Mammary epithelial cell (primary cell): ENCODE measurements at regions of chr6 and their contacts with region 1.

Region 1: DNA sequence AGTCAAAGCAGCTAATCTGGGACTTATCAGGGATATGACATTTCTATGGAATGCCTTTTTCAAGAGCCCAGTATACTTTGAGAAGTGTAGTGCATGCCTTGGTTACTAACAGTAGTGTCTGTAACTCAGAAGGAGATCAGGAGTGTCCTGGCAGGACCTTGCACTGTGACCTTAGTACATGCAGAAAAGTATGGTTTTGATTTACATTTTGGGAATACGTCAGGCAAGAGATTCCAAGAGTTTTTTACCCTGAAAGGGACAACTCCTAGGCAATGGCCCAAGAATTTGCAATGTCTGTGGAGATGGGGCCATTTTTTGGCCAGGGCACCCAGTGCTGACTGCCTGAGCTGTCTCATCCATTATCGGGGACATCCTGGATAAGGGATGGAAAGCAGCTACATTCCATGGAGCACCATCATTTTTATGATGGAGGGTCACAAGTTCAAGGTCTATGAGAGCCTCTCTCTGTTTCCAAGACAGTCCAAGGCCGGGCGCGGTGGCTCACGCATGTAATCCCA is 80.2 kb downstream of the FAM50B start:
- DNase-seq: no peak
- H3K4me3 ChIP-seq: no peak overlapping the region
- H3K27ac ChIP-seq: no peak overlapping the region
- H3K4me1 ChIP-seq: no peaks in the 10 kb centered on the region
- H3K27me3 ChIP-seq: no peaks in the 10 kb centered on the region
- CTCF ChIP-seq: no peak

Region 2: GRCh38 chr6:3687847-3688246 is 241.5 kb before region 1 on chr6:
- CTCF ChIA-PET with region 1: interaction called, 47 read pairs
- dilution Hi-C with region 1: no loop called
- in situ Hi-C with region 1: no loop called
- intact Hi-C with region 1: no loop called
- DNase-seq: no peak
- H3K4me3 ChIP-seq: no peak overlapping the region
- H3K27ac ChIP-seq: no peak overlapping the region
- H3K4me1 ChIP-seq: no peaks in the 10 kb centered on the region
- H3K27me3 ChIP-seq: no peaks in the 10 kb centered on the region
- CTCF ChIP-seq: no peak

Region 3: GRCh38 chr6:3825851-3826581 is 103.3 kb before region 1 on chr6:
- CTCF ChIA-PET with region 1: no interaction called
- dilution Hi-C with region 1: no loop called
- in situ Hi-C with region 1: no loop called
- intact Hi-C with region 1: loop called (anchors 1 kb)
- DNase-seq: peak; percentile 95
- H3K4me3 ChIP-seq: peak overlapping the region in 1 of 3 experiments; percentile 11
- H3K27ac ChIP-seq: peak overlapping the region; percentile 91
- H3K4me1 ChIP-seq: peaks cover 61% of the 10 kb centered on the region
- H3K27me3 ChIP-seq: no peaks in the 10 kb centered on the region
- CTCF ChIP-seq: no peak

Region 4: GRCh38 chr6:3857468-3858456 is 71.6 kb before region 1 on chr6:
- CTCF ChIA-PET with region 1: no interaction called
- dilution Hi-C with region 1: no loop called
- in situ Hi-C with region 1: no loop called
- intact Hi-C with region 1: no loop called
- DNase-seq: no peak
- H3K4me3 ChIP-seq: no peak overlapping the region
- H3K27ac ChIP-seq: no peak overlapping the region
- H3K4me1 ChIP-seq: no peaks in the 10 kb centered on the region
- H3K27me3 ChIP-seq: no peaks in the 10 kb centered on the region
- CTCF ChIP-seq: no peak

Region 5: GRCh38 chr6:3887150-3887700 is 42.1 kb before region 1 on chr6:
- CTCF ChIA-PET with region 1: no interaction called
- dilution Hi-C with region 1: no loop called
- in situ Hi-C with region 1: no loop called
- intact Hi-C with region 1: loop called (anchors 1 kb)
- DNase-seq: no peak
- H3K4me3 ChIP-seq: no peak overlapping the region
- H3K27ac ChIP-seq: no peak overlapping the region
- H3K4me1 ChIP-seq: peaks cover 11% of the 10 kb centered on the region
- H3K27me3 ChIP-seq: no peaks in the 10 kb centered on the region
- CTCF ChIP-seq: peak; percentile 38 to 61

Region 6: DNA sequence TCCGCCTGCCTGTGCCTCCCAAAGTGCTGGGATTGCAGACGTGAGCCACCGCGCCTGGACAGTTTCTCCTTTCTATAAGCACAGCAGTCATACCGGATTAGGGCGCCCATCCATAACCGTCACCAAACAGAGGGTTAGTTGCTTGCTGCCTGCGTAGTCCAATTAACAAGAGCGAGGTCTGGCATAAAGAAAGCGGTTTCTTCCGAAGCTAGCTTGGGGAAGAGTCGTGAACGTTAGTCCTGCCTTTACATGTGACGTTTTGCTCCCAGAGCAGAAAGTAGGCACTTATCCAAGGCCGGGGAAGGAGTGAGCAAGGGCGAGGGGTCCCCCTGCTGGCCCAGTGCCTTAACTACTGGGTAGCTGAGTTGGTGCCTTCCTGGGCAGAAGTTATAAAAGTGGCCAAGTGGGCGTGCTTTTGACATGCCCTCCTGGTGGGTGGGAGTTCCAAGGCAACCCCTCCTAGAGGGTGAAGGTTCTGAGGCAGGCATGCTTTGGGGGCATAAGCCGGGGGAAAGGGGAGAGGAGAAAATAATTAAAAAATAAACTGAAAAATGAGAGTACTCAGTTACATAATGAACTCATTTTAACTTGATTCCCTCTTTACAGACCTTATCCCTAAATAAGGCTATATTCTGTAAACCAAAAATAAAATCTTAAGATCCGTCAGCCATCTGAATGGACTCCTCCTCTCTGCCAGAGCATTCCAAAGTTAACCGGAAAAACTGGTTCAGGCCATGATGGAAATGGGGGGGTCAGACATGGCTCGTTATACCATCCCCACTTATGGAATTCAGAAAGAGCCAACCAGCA is 61.6 kb after region 1 on chr6:
- CTCF ChIA-PET with region 1: no interaction called
- dilution Hi-C with region 1: no loop called
- in situ Hi-C with region 1: no loop called
- intact Hi-C with region 1: loop called (anchors 5 kb)
- DNase-seq: peak; percentile 77
- H3K4me3 ChIP-seq: peak overlapping the region; percentile 27 to 42 (median 41)
- H3K27ac ChIP-seq: peak overlapping the region; percentile 42
- H3K4me1 ChIP-seq: peaks cover 13% of the 10 kb centered on the region
- H3K27me3 ChIP-seq: no peaks in the 10 kb centered on the region
- CTCF ChIP-seq: peak; percentile 90 to 97

Region 7: GRCh38 chr6:4135665-4136353 is 206.5 kb after region 1 on chr6:
- CTCF ChIA-PET with region 1: interaction called, 27 read pairs
- dilution Hi-C with region 1: no loop called
- in situ Hi-C with region 1: no loop called
- intact Hi-C with region 1: no loop called
- DNase-seq: peak; percentile 82
- H3K4me3 ChIP-seq: peak overlapping the region; percentile 50 to 66 (median 62)
- H3K27ac ChIP-seq: peak overlapping the region; percentile 43
- H3K4me1 ChIP-seq: peaks cover 9% of the 10 kb centered on the region
- H3K27me3 ChIP-seq: no peaks in the 10 kb centered on the region
- CTCF ChIP-seq: no peak